Testis (tissue), 5 donors: ENCODE measurements at regions of chr7 and their contacts with region 1.

Region 1: DNA sequence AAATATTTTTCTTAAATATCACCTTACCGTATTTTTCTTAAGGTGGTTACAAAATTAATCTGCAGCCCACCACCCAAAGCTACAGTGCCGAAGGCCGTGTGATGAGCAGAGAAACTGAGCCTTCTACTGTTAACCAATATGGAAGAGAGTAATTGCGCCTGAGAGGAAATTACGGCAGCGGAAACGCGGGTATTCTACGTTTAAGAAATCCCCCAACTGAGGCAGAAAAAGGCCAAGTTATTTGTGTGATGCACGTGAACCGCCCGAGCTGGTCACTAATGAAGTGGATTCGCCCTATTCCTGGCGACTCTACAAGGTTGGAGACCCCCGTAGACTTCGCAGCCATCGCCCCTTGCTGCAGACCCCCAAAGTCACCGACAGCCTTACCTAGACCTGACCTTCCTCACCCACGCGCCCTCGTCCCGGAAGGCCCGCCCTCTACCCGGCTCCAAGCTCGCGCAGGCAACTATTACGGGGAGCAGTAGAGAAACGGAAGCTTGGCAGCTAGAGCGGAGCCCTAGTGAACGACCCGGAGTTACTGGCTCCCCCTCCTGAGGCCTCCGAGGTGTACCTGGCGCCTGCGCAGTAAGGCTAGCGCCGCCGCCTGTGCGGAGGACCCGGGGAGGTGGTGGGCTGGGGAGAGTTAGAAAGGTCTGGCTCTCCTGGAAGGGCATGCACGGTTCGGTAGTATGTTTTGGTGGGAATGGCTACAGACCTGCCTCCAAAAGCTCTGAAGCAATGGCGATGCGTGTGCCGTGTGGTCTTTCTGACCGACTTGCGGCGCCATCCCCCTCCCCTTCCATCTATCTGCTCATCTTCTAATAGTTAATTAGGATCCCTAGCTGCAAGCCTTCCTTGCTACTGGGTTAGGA is at the start of gene MRPS33:
- DNase-seq: peak; percentile 99
- H3K4me3 ChIP-seq: peak within 1 kb of the TSS; percentile 55 to 67
- H3K27ac ChIP-seq: peak within 1 kb of the TSS; percentile 83 to 86
- H3K4me1 ChIP-seq: peaks cover 6% of the 10 kb centered on the region
- H3K27me3 ChIP-seq: no peaks in the 10 kb centered on the region
- CTCF ChIP-seq: peak; percentile 19 to 42 (median 20)
- POLR2A ChIP-seq: no peak
- total RNA-seq, gene MRPS33: 28.8 to 31.9 TPM

Region 2: GRCh38 chr7:140810830-140811556 is 203.8 kb before region 1 on chr7:
- intact Hi-C with region 1: loop called (anchors 10 kb)
- DNase-seq: peak; percentile 80
- H3K4me3 ChIP-seq: no peak overlapping the region
- H3K27ac ChIP-seq: no peak overlapping the region
- H3K4me1 ChIP-seq: no peaks in the 10 kb centered on the region
- H3K27me3 ChIP-seq: no peaks in the 10 kb centered on the region
- CTCF ChIP-seq: peak; percentile 52 to 66 (median 63)
- POLR2A ChIP-seq: no peak

Region 3: GRCh38 chr7:141145630-141145982 is 130.8 kb after region 1 on chr7:
- intact Hi-C with region 1: no loop called
- DNase-seq: no peak
- H3K4me3 ChIP-seq: no peak overlapping the region
- H3K27ac ChIP-seq: no peak overlapping the region
- H3K4me1 ChIP-seq: no peaks in the 10 kb centered on the region
- H3K27me3 ChIP-seq: no peaks in the 10 kb centered on the region
- CTCF ChIP-seq: no peak
- POLR2A ChIP-seq: no peak